ENCODE measurements at regions of chr10 and their contacts with region 1.

Region 1: GRCh38 chr10:58384999-58385783 is at the start of gene TFAM:
- DNase-seq: peak; percentile 99
- H3K4me3 Mint-ChIP-seq: peak within 1 kb of the TSS; percentile 99
- H3K27ac Mint-ChIP-seq: peak within 1 kb of the TSS; percentile 92
- H3K4me1 Mint-ChIP-seq: peaks cover 37% of the 10 kb centered on the region
- H3K27me3 Mint-ChIP-seq: no peaks in the 10 kb centered on the region
- total RNA-seq, gene TFAM: 85.4 to 92.5 TPM

Region 2: GRCh38 chr10:58299580-58299979 is 85.6 kb before region 1 on chr10:
- CTCF ChIA-PET with region 1: interaction called, 39 read pairs
- POLR2A ChIA-PET with region 1: no interaction called
- intact Hi-C with region 1: loop called (anchors 1 kb)
- DNase-seq: peak; percentile 70
- H3K4me3 Mint-ChIP-seq: no peak overlapping the region
- H3K27ac Mint-ChIP-seq: no peak overlapping the region
- H3K4me1 Mint-ChIP-seq: peaks cover 2% of the 10 kb centered on the region
- H3K27me3 Mint-ChIP-seq: peaks cover 2% of the 10 kb centered on the region

Region 3: DNA sequence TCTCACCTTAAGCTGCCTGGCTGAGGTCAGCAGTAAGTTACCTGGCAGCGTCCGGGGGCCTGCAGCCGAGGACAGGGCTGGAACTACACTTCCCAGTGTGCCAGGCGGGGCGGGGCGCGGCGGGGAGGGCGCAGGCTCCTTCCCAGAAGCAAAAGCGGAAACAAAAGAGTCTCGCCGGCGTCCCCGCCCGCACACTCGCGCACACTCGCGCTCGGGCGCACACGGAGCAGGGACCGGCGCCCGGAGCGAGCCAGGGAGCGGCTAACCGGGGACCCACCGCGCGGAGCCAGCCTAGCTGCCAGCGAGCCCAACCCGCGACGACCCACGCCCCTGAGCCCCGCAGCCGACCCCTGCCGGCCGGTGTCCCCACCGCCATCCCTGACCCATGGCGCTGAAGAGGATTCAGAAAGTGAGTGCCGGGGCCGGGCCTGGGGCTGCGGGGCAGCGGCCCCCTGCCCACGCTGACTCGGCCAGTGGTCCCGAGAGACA is 50.3 kb before region 1 on chr10 and contains the start of gene UBE2D1:
- CTCF ChIA-PET with region 1: interaction called, 11 read pairs
- POLR2A ChIA-PET with region 1: interaction called, 17 read pairs
- intact Hi-C with region 1: loop called (anchors 1 kb)
- DNase-seq: peak; percentile 88
- H3K4me3 Mint-ChIP-seq: peak within 1 kb of the TSS; percentile 96
- H3K27ac Mint-ChIP-seq: peak within 1 kb of the TSS; percentile 75
- H3K4me1 Mint-ChIP-seq: peaks cover 29% of the 10 kb centered on the region
- H3K27me3 Mint-ChIP-seq: peaks cover 6% of the 10 kb centered on the region
- total RNA-seq, gene UBE2D1: 14.5 to 14.8 TPM

Region 4: GRCh38 chr10:58546722-58547445 is 161.7 kb after region 1 on chr10:
- CTCF ChIA-PET with region 1: no interaction called
- POLR2A ChIA-PET with region 1: no interaction called
- intact Hi-C with region 1: no loop called
- DNase-seq: no peak
- H3K4me3 Mint-ChIP-seq: no peak overlapping the region
- H3K27ac Mint-ChIP-seq: no peak overlapping the region
- H3K4me1 Mint-ChIP-seq: no peaks in the 10 kb centered on the region
- H3K27me3 Mint-ChIP-seq: peaks cover 2% of the 10 kb centered on the region

Region 5: GRCh38 chr10:58608351-58608750 is 223.2 kb after region 1 on chr10:
- CTCF ChIA-PET with region 1: no interaction called
- POLR2A ChIA-PET with region 1: no interaction called
- intact Hi-C with region 1: no loop called
- DNase-seq: no peak
- H3K4me3 Mint-ChIP-seq: no peak overlapping the region
- H3K27ac Mint-ChIP-seq: no peak overlapping the region
- H3K4me1 Mint-ChIP-seq: no peaks in the 10 kb centered on the region
- H3K27me3 Mint-ChIP-seq: no peaks in the 10 kb centered on the region

Measured in activated CD4-positive, alpha-beta memory T cell treated with anti-CD3 and anti-CD28 coated beads for 36 hours (primary cell).